Activated T-helper 1 cell treated with anti-CD3 and anti-CD28 coated beads, Interleukin-12 subunit alpha, Interleukin-12 subunit beta, Interleukin-2, Interleukin-4 antibody, amounts not matched to agents 30 ng/mL and 10 ng/mL and 1 ng/mL, durations not matched to agents 14 hours and 24 hours and 36 hours (primary cell): ENCODE measurements at regions of chr1 and their contacts with region 1.

Region 1: GRCh38 chr1:32072622-32073298 is at the start of gene TMEM39B:
- DNase-seq: peak; percentile 93
- H3K4me3 Mint-ChIP-seq: peak within 1 kb of the TSS; percentile 92
- H3K27ac Mint-ChIP-seq: peak within 1 kb of the TSS; percentile 95
- H3K4me1 Mint-ChIP-seq: peaks cover 45% of the 10 kb centered on the region
- H3K27me3 Mint-ChIP-seq: no peaks in the 10 kb centered on the region
- total RNA-seq, gene TMEM39B: 34.2 and 38.8 TPM in 2 replicates

Region 2: DNA sequence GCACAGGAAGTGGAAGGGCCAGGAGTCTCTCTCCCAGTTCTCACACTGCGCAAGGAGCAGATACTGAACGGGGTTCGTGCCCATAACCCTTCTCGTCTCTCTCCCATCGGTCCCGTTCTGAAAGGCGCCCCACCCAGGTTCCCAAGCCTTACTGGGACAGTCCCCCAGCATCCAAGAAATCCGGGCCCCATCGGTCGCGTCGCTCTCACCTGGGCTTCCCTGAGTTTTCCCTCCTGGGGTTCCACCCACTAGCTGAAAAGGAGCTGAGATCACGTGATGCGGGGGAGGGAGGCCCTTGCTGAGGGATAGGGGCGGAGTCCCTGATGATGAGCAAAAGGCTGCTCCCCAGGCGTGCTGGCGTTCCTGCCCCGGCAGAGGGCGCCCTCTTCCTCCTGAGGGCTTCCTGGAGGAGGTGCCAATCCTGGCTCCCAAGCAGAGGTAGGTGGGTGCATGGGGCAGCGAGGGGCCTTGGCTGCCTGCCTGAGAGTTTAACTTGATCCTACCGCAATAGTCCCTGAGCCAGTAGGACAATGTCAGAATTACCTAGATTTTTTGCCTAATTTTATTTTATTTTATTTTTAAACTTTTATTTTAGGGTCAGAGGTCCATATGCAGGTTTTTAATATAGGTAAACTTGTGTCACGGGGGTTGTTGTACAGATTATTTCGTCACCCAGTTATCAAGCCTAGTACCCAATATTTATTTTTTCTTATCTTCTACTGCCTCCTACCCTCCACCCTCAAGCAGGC is 256.8 kb before region 1 on chr1 and contains the start of gene SPOCD1:
- intact Hi-C with region 1: loop called (anchors 1 kb)
- DNase-seq: peak; percentile 74
- H3K4me3 Mint-ChIP-seq: no peak within 1 kb of the TSS
- H3K27ac Mint-ChIP-seq: no peak within 1 kb of the TSS
- H3K4me1 Mint-ChIP-seq: peaks cover 10% of the 10 kb centered on the region
- H3K27me3 Mint-ChIP-seq: peaks cover 6% of the 10 kb centered on the region
- total RNA-seq, gene SPOCD1: not detected in 2 replicates

Region 3: DNA sequence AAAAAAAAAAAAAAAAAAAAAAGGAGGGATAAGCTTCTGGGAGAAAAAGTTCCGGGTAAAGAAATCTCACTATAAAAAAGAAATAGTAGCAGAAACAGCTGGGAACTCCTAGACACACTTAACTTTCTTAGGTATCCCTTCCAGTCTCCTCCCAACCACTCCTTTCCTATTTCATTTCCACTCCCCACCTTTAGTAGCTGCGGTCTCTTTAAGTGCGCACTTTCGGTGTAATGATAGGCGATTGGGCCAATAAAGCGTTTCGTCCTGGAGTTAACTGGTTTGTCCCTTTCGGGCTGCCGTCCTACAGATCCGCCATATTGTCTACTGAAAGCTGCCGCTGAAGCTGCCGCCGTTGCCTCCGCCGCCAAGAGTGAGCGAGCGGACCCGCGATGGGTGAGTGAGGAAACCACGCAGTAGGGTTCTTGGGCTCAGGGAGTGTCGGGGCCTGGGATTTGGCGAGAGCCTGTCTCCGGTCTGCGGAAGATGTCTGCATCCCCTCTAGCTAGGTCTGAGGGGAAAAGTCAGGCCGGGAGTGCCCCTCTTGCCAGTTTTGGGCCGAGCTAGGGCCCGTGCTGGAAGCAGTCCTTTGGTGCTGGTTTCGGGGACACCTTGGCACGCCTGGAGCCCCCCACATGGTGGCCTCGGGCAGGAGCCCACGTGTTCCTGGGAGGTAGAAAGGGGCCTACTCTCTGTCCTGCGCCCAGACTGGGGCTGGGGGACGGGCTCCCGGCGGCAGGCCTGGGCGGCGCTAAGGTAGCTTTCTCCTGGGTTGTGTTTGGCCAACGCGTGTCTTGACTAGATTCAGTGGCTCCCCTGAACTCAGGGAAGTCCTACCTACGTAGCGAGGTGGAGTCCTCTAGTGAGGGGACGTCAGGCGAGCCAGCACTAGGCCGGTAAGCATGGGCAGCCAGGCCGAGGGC is 35.2 kb after region 1 on chr1 and contains the start of gene KPNA6:
- intact Hi-C with region 1: loop called (anchors 1 kb)
- DNase-seq: peak; percentile 89
- H3K4me3 Mint-ChIP-seq: peak within 1 kb of the TSS; percentile 98
- H3K27ac Mint-ChIP-seq: peak within 1 kb of the TSS; percentile 94
- H3K4me1 Mint-ChIP-seq: peaks cover 43% of the 10 kb centered on the region
- H3K27me3 Mint-ChIP-seq: no peaks in the 10 kb centered on the region
- total RNA-seq, gene KPNA6: 76.7 and 78.6 TPM in 2 replicates

Region 4: GRCh38 chr1:32200226-32201010 is 127.7 kb after region 1 on chr1 and contains the start of gene CCDC28B:
- intact Hi-C with region 1: loop called (anchors 1 kb)
- DNase-seq: peak; percentile 55
- H3K4me3 Mint-ChIP-seq: peak within 1 kb of the TSS; percentile 92
- H3K27ac Mint-ChIP-seq: peak within 1 kb of the TSS; percentile 97
- H3K4me1 Mint-ChIP-seq: peaks cover 69% of the 10 kb centered on the region
- H3K27me3 Mint-ChIP-seq: no peaks in the 10 kb centered on the region
- total RNA-seq, gene CCDC28B: 28.2 and 32.6 TPM in 2 replicates

Region 5: DNA sequence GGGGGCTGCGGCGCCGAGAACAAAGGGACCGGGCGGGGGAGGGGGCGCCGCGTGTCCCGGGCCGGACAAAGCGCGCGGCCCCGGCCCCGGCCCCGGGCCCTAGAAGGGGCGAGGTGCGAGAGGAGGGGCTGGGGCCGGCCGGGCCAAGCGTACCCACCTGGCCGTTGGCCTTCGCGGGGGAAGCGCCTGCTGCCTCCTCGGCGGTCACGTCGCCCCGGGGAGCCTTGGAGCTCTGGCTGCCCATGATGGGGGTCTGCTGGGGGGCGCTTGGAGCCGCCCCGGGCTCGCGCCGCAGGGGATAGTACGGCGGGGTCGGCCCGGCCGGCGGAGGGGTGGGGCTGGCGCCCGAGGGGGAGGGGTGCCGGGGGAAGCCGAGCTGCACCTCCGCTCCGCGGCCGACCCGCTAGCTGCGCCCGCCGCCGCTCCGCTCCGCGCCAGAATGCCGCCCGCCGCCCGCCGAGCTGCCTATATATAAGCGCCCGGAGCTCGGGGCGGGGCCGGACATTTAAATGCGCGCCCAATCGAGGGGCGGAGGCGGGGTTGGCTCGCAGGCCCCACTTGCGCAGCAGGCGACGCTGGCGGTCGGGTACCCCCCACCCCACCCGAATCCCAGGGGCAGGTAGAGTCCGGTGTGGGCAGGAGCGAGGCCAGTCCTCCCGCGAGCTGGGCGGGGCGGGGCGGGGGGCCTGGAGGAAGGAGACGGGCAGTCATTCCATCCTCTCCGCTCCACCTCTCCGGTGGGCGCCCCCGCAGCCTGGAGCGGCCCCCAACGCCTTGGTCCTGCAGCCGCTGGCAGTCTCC is 263.2 kb after region 1 on chr1 and contains the start of gene MARCKSL1:
- intact Hi-C with region 1: loop called (anchors 2 kb)
- DNase-seq: peak; percentile 80
- H3K4me3 Mint-ChIP-seq: peak within 1 kb of the TSS; percentile 88
- H3K27ac Mint-ChIP-seq: peak within 1 kb of the TSS; percentile 67
- H3K4me1 Mint-ChIP-seq: peaks cover 52% of the 10 kb centered on the region
- H3K27me3 Mint-ChIP-seq: no peaks in the 10 kb centered on the region
- total RNA-seq, gene MARCKSL1: 31.6 and 31.8 TPM in 2 replicates

Region 6: GRCh38 chr1:32650752-32651460 is 578.1 kb after region 1 on chr1 and contains the start of gene RBBP4:
- intact Hi-C with region 1: loop called (anchors 1 kb)
- DNase-seq: peak; percentile 99
- H3K4me3 Mint-ChIP-seq: peak within 1 kb of the TSS; percentile 94
- H3K27ac Mint-ChIP-seq: peak within 1 kb of the TSS; percentile 100
- H3K4me1 Mint-ChIP-seq: peaks cover 55% of the 10 kb centered on the region
- H3K27me3 Mint-ChIP-seq: peaks cover 2% of the 10 kb centered on the region
- total RNA-seq, gene RBBP4: 315 TPM in 2 replicates